CD8-positive, alpha-beta T cell (primary cell): ENCODE measurements at regions of chr9 and their contacts with region 1.

Region 1: DNA sequence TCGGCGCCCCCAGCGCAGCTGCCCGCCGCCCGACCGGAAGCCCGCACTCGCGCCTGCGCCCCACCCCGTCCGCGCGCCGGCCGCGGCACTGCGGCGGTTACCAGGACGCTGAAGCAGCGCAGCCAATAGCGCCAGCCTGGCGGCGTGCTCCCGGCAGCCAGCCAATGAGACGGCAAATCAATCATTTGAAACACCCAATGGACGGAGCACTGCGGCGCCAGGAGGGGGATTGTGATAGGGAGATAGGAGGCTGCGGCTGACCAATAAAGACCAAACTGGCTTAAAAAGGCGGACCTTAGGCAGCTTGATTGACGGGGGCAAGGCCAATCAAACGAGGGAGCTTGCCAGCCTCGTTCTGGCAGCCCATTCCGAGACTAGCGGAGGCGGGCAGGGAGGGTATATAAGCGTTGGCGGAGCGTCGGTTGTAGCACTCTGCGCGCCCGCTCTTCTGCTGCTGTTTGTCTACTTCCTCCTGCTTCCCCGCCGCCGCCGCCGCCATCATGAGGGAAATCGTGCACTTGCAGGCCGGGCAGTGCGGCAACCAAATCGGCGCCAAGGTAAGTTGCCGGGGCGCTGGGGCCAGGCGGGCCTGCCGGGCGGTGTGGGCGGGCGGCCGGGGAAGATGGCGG is at the start of gene TUBB4B:
- DNase-seq: peak; percentile 93 to 100 (median 97)
- ATAC-seq: peak; percentile 78
- H3K4me3 ChIP-seq: peak within 1 kb of the TSS; percentile 59 to 68
- H3K4me3 Mint-ChIP-seq: peak within 1 kb of the TSS; percentile 91
- H3K27ac ChIP-seq: peak within 1 kb of the TSS; percentile 73 to 85
- H3K27ac Mint-ChIP-seq: peak within 1 kb of the TSS; percentile 93
- H3K4me1 ChIP-seq: peaks cover 37% of the 10 kb centered on the region
- H3K4me1 Mint-ChIP-seq: peaks cover 25% of the 10 kb centered on the region
- H3K27me3 ChIP-seq: no peaks in the 10 kb centered on the region
- H3K27me3 Mint-ChIP-seq: no peaks in the 10 kb centered on the region
- CTCF ChIP-seq: no peak
- total RNA-seq, gene TUBB4B: 114 to 120 TPM

Region 2: DNA sequence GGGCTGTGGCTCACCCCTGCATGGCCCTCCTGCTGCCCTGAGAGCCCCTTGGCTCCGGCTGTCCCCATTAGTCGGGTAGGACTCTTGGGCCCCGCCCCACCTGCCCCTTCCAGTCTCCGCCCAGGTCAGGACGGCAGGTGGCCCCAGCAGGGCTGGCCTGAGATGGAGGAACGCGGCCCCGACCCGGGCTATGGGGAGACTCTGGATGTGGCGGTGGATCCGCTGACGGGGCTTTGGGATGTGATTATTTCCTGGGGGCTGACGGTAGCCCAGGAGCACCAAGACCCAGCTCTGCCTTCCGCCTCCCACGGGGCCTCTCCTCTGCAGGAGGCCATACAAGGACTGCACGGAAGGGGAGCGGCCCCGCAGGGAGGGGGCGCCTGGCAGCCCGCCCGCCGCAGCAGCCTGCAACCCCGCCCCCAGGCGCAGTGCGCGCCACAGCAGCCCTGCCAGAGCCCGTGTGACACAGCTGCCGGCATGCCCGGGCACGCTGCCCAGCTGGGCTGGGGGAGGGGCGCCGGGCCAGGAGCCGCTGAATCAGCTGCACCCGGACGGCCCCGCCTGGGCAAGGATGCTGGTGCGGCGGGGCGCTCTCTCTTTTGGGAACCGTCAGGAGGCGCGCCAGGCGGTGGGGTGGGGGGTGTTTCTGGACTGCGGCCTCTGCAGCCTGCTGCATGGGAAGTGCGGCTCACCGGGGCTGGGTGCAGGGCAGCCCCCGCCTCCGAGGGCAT is 1131.5 kb before region 1 on chr9:
- CTCF ChIA-PET with region 1: no interaction called
- POLR2A ChIA-PET with region 1: interaction called, 3 read pairs
- intact Hi-C with region 1: loop called in 1 of 2 experiments (anchors 5 kb)
- DNase-seq: peak; percentile 77 to 95 (median 92)
- ATAC-seq: peak; percentile 91
- H3K4me3 ChIP-seq: peak overlapping the region; percentile 58 to 65
- H3K4me3 Mint-ChIP-seq: peak overlapping the region; percentile 83
- H3K27ac ChIP-seq: peak overlapping the region; percentile 28 to 84
- H3K27ac Mint-ChIP-seq: peak overlapping the region; percentile 84
- H3K4me1 ChIP-seq: peaks cover 93% of the 10 kb centered on the region
- H3K4me1 Mint-ChIP-seq: peaks cover 73% of the 10 kb centered on the region
- H3K27me3 ChIP-seq: no peaks in the 10 kb centered on the region
- H3K27me3 Mint-ChIP-seq: no peaks in the 10 kb centered on the region
- CTCF ChIP-seq: no peak

Region 3: DNA sequence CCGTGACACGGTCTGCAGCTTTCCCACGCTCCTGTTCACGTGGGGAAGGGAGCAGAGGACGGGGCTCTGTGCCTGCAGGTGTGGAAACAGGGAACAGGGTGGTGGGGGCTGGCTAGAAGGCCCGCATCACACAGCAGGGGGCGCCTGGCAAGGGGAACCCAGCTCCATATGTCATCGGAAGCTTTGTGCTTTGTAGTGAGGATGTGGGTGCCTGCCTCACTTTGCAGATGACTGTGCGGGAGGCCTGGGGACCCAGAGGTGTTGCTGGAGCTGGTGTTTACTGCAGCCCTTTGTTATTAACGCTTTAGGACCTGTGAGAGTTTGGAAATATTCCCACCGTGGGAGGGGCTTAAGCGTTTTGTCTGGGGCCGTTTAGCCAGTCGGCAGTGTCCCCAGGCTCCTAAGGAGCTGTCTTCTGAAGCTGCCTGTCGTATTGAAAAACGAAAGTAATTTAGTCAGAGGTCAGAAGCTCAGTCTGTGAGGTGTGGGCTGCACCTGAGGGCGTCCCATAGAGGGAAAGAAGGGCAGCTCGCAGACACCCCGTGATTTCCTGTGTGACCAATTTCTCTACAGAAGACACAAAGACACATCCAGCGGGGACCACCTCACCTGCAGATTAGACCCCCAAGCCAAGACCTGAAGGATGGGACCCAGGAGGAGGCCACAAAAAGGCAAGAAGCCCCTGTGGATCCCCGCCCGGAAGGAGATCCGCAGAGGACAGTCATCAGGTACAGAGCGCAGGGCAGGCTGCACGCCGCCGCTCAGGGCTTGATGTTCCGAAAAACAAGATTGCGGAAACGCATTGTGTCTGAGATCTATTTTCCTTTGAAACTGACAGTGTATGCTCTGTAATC is 145.1 kb before region 1 on chr9:
- CTCF ChIA-PET with region 1: interaction called, 12 read pairs
- POLR2A ChIA-PET with region 1: interaction called, 10 read pairs
- intact Hi-C with region 1: no loop called
- DNase-seq: peak; percentile 73 to 95 (median 87)
- ATAC-seq: peak; percentile 97
- H3K4me3 ChIP-seq: peak overlapping the region; percentile 27 to 57
- H3K4me3 Mint-ChIP-seq: peak overlapping the region; percentile 80
- H3K27ac ChIP-seq: peak overlapping the region; percentile 73 to 84
- H3K27ac Mint-ChIP-seq: peak overlapping the region; percentile 96
- H3K4me1 ChIP-seq: peaks cover 22% of the 10 kb centered on the region
- H3K4me1 Mint-ChIP-seq: peaks cover 24% of the 10 kb centered on the region
- H3K27me3 ChIP-seq: no peaks in the 10 kb centered on the region
- H3K27me3 Mint-ChIP-seq: no peaks in the 10 kb centered on the region
- CTCF ChIP-seq: peak; percentile 68

Region 4: GRCh38 chr9:137188490-137189296 is 52.3 kb before region 1 on chr9 and contains the starts of genes ANAPC2 and SSNA1:
- CTCF ChIA-PET with region 1: interaction called, 21 read pairs
- POLR2A ChIA-PET with region 1: interaction called, 5 read pairs
- intact Hi-C with region 1: loop called (anchors 1 kb)
- DNase-seq: peak; percentile 84 to 98 (median 94)
- ATAC-seq: peak; percentile 80
- H3K4me3 ChIP-seq: peak within 1 kb of the TSS; percentile 92 to 100
- H3K4me3 Mint-ChIP-seq: peak within 1 kb of the TSS; percentile 93
- H3K27ac ChIP-seq: peak within 1 kb of the TSS; percentile 95 to 96
- H3K27ac Mint-ChIP-seq: peak within 1 kb of the TSS; percentile 96
- H3K4me1 ChIP-seq: peaks cover 34% of the 10 kb centered on the region
- H3K4me1 Mint-ChIP-seq: peaks cover 41% of the 10 kb centered on the region
- H3K27me3 ChIP-seq: no peaks in the 10 kb centered on the region
- H3K27me3 Mint-ChIP-seq: no peaks in the 10 kb centered on the region
- CTCF ChIP-seq: peak; percentile 56
- total RNA-seq, gene ANAPC2: 166 to 171 TPM
- total RNA-seq, gene SSNA1: 28.8 to 29.6 TPM

Region 5: GRCh38 chr9:137254624-137255447 is 13.9 kb after region 1 on chr9 and contains the start of gene NELFB:
- CTCF ChIA-PET with region 1: interaction called, 23 read pairs
- POLR2A ChIA-PET with region 1: interaction called, 80 read pairs
- intact Hi-C with region 1: loop called in 1 of 2 experiments (anchors 1 kb)
- DNase-seq: peak; percentile 91 to 99 (median 95)
- ATAC-seq: peak; percentile 92
- H3K4me3 ChIP-seq: peak within 1 kb of the TSS; percentile 81 to 83
- H3K4me3 Mint-ChIP-seq: peak within 1 kb of the TSS; percentile 88
- H3K27ac ChIP-seq: peak within 1 kb of the TSS; percentile 12 to 38
- H3K27ac Mint-ChIP-seq: peak within 1 kb of the TSS; percentile 73
- H3K4me1 ChIP-seq: peaks cover 18% of the 10 kb centered on the region
- H3K4me1 Mint-ChIP-seq: peaks cover 15% of the 10 kb centered on the region
- H3K27me3 ChIP-seq: no peaks in the 10 kb centered on the region
- H3K27me3 Mint-ChIP-seq: no peaks in the 10 kb centered on the region
- CTCF ChIP-seq: no peak
- total RNA-seq, gene NELFB: 17.1 to 17.6 TPM

Region 6: GRCh38 chr9:137302176-137302994 is 61.4 kb after region 1 on chr9 and contains the start of gene NRARP:
- CTCF ChIA-PET with region 1: no interaction called
- POLR2A ChIA-PET with region 1: interaction called, 5 read pairs
- intact Hi-C with region 1: loop called in 1 of 2 experiments (anchors 2 kb)
- DNase-seq: peak; percentile 74 to 95 (median 90)
- ATAC-seq: peak; percentile 94
- H3K4me3 ChIP-seq: peak within 1 kb of the TSS; percentile 39 to 50
- H3K4me3 Mint-ChIP-seq: peak within 1 kb of the TSS; percentile 60
- H3K27ac ChIP-seq: no peak within 1 kb of the TSS
- H3K27ac Mint-ChIP-seq: no peak within 1 kb of the TSS
- H3K4me1 ChIP-seq: peaks cover 48% of the 10 kb centered on the region
- H3K4me1 Mint-ChIP-seq: peaks cover 16% of the 10 kb centered on the region
- H3K27me3 ChIP-seq: peaks cover 20 to 21% of the 10 kb centered on the region in 2 experiments
- H3K27me3 Mint-ChIP-seq: peaks cover 14% of the 10 kb centered on the region
- CTCF ChIP-seq: peak; percentile 42
- total RNA-seq, gene NRARP: 1.00 to 1.5 TPM